ENCODE measurements at regions of chr2 and their contacts with region 1.

Region 1: GRCh38 chr2:37585982-37586621 is 85.3 kb downstream of the CDC42EP3 start:
- DNase-seq: peak; percentile 96
- H3K4me3 ChIP-seq: no peak overlapping the region
- H3K27ac ChIP-seq: peak overlapping the region; percentile 75
- H3K4me1 ChIP-seq: peaks cover 88% of the 10 kb centered on the region
- H3K27me3 ChIP-seq: no peaks in the 10 kb centered on the region
- CTCF ChIP-seq: no peak
- POLR2A ChIP-seq: no peak

Region 2: GRCh38 chr2:37604716-37605115 is 18.6 kb after region 1 on chr2:
- CTCF ChIA-PET with region 1: interaction called, 5 read pairs
- POLR2A ChIA-PET with region 1: no interaction called
- dilution Hi-C with region 1: no loop called
- intact Hi-C with region 1: loop called (anchors 1 kb)
- DNase-seq: peak; percentile 72
- H3K4me3 ChIP-seq: no peak overlapping the region
- H3K27ac ChIP-seq: no peak overlapping the region
- H3K4me1 ChIP-seq: peaks cover 14% of the 10 kb centered on the region
- H3K27me3 ChIP-seq: no peaks in the 10 kb centered on the region
- CTCF ChIP-seq: no peak
- POLR2A ChIP-seq: no peak

Region 3: GRCh38 chr2:37648331-37649011 is 62.4 kb after region 1 on chr2:
- CTCF ChIA-PET with region 1: interaction called, 8 read pairs
- POLR2A ChIA-PET with region 1: no interaction called
- dilution Hi-C with region 1: no loop called
- intact Hi-C with region 1: loop called (anchors 1 kb)
- DNase-seq: peak; percentile 80
- H3K4me3 ChIP-seq: no peak overlapping the region
- H3K27ac ChIP-seq: peak overlapping the region; percentile 68
- H3K4me1 ChIP-seq: peaks cover 80% of the 10 kb centered on the region
- H3K27me3 ChIP-seq: no peaks in the 10 kb centered on the region
- CTCF ChIP-seq: peak; percentile 33 to 41
- POLR2A ChIP-seq: no peak

Region 4: DNA sequence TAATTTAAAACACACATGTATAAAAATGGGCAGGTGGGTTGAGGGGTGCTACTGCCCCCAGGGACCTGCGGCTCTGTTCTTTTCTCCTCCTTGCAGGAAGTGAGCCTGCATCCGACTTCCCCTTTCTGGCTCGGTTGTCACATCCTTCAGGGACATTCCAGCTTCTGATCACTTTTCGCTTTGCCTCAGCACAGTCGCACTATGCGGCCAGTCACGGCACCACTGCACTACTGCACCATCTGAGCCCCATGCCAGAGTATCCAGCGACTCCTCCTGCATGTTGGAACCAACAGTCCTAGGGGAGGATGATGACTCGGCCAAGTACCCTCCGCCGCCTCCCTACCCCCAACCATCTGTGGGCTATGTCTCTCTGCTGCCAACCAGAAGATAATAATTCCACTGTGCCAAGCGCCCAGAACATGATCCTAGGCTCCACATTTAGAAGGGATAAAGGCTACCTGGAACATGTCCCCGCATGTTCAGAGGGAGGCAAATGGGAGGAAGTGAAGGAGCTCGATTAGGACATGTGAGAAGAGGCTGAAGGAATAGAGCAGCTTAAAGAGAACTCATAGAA is 67.8 kb after region 1 on chr2:
- CTCF ChIA-PET with region 1: interaction called, 8 read pairs
- POLR2A ChIA-PET with region 1: no interaction called
- dilution Hi-C with region 1: no loop called
- intact Hi-C with region 1: loop called (anchors 1 kb)
- DNase-seq: no peak
- H3K4me3 ChIP-seq: no peak overlapping the region
- H3K27ac ChIP-seq: peak overlapping the region; percentile 97
- H3K4me1 ChIP-seq: peaks cover 79% of the 10 kb centered on the region
- H3K27me3 ChIP-seq: no peaks in the 10 kb centered on the region
- CTCF ChIP-seq: no peak
- POLR2A ChIP-seq: peak; percentile 6

Measured in endothelial cell of umbilical vein (primary cell).